CD4-positive, alpha-beta memory T cell (primary cell): ENCODE measurements at regions of chr17 and their contacts with region 1.

Region 1: DNA sequence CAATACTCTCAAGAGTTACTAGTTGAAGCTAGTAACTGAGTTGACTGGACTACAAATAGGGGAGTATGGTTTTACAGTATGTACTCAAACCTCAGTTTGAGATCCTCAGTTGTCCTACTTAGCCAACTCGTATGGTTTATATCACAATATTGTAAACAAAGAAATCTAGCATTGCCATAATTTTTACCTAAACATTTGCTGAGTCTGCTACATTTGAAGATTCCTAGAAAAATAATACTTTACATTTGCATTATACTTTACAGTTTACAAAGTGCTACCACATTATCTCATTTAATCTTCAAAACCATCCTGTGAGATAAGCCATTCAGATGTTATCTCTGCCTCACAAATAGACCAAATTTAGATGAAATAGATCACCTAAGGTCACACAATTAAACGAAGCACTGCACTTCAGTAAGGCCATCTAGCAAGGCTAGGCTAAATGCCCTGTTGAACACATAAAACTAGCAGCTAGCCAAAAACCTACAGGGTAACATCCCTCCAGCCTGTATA is 16.3 kb downstream of the CBX1 start:
- DNase-seq: no peak
- H3K4me3 ChIP-seq: no peak overlapping the region
- H3K4me3 Mint-ChIP-seq: no peak overlapping the region
- H3K27ac ChIP-seq: no peak overlapping the region
- H3K27ac Mint-ChIP-seq: no peak overlapping the region
- H3K4me1 ChIP-seq: no peaks in the 10 kb centered on the region
- H3K4me1 Mint-ChIP-seq: peaks cover 7 to 10% (median 9%) of the 10 kb centered on the region in 4 donors
- H3K27me3 ChIP-seq: no peaks in the 10 kb centered on the region
- H3K27me3 Mint-ChIP-seq: no peaks in the 10 kb centered on the region

Region 2: DNA sequence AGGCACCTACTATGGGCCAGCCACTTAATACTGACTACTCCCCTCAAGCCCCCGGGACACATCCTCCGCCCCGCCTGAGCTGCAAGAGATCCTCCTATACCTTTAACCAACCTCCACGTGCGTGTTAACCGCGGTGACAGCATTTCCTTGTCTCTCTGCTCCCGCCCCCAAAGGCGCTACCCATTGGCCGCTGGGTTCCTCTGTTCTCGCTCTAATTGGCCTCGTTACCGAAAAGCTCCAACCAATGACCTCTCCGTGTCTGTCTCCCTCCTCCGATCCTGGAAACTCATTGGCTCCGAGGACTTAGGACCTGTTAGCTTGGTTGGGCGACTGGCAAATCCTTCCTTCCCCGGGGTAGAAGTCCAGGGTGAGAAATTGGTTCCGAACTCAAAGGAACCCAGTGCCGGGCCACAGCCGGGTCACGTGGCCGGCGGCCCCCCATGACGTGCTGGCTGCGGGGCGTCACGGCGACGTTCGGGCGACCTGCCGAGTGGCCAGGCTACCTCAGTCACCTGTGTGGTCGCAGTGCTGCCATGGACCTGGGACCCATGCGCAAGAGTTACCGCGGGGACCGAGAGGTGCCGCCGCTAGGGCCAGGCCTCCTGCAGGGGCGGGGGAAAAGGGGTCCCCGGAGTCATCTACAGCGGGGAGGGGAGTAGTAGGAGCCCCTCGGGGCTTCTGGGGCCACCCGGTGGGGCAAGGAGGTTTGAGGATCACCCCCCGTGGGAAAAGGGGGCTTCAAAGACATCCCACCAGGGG is 143.6 kb before region 1 on chr17 and contains the start of gene PNPO:
- CTCF ChIA-PET with region 1: no interaction called
- POLR2A ChIA-PET with region 1: no interaction called
- intact Hi-C with region 1: loop called (anchors 10 kb)
- DNase-seq: peak; percentile 93 to 98 (median 94)
- H3K4me3 ChIP-seq: peak within 1 kb of the TSS; percentile 82 to 85
- H3K4me3 Mint-ChIP-seq: peak within 1 kb of the TSS; percentile 77 to 95 (median 88)
- H3K27ac ChIP-seq: peak within 1 kb of the TSS; percentile 76
- H3K27ac Mint-ChIP-seq: peak within 1 kb of the TSS; percentile 62 to 96 (median 92)
- H3K4me1 ChIP-seq: peaks cover 29% of the 10 kb centered on the region
- H3K4me1 Mint-ChIP-seq: peaks cover 20 to 46% (median 32%) of the 10 kb centered on the region in 4 donors
- H3K27me3 ChIP-seq: no peaks in the 10 kb centered on the region
- H3K27me3 Mint-ChIP-seq: no peaks in the 10 kb centered on the region
- total RNA-seq, gene PNPO: 12.1 TPM

Region 3: GRCh38 chr17:47956661-47957590 is 128.1 kb before region 1 on chr17:
- CTCF ChIA-PET with region 1: no interaction called
- POLR2A ChIA-PET with region 1: no interaction called
- intact Hi-C with region 1: no loop called
- DNase-seq: no peak
- H3K4me3 ChIP-seq: no peak overlapping the region
- H3K4me3 Mint-ChIP-seq: no peak overlapping the region
- H3K27ac ChIP-seq: no peak overlapping the region
- H3K27ac Mint-ChIP-seq: peak overlapping the region in 1 of 7 donors; percentile 68
- H3K4me1 ChIP-seq: no peaks in the 10 kb centered on the region
- H3K4me1 Mint-ChIP-seq: no peaks in the 10 kb centered on the region
- H3K27me3 ChIP-seq: no peaks in the 10 kb centered on the region
- H3K27me3 Mint-ChIP-seq: no peaks in the 10 kb centered on the region

Region 4: DNA sequence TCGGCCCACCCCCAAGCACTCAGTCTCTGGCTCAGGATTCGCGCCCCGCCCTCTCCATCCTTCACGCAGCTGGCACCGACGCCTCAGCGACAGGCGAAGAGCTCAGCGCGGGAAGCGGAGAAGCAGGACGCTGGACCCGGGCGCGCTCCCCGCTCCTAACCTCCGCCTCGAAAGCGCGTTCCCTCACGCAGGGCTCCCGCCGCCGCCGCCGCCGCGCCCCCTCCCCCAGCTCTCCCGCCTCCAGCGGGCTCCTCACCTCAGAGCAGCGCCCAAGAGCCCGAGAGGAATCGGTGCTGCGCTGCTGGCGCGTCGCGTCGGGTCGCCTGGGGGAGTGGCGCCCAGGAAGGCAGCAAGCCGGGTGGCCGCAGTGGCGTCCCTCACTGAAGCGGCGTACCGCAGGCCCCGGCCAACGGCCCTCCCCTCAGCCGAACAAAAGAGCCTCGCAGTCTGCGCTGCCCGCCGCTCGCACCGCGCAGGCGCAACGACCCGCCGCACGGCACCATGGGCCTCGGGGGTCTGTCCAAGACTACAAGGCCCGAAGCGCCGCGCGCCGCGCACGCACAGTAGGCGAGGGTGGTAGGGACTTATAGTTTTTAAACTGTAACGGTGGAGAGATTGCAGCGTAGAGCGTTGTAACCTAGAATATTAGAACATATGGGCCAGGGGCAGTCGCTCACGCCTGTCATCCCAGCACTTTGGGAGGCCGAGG is 16.2 kb after region 1 on chr17 and contains the start of gene CBX1:
- CTCF ChIA-PET with region 1: interaction called, 73 read pairs
- POLR2A ChIA-PET with region 1: no interaction called
- intact Hi-C with region 1: loop called (anchors 2 kb)
- DNase-seq: peak; percentile 93 to 96 (median 93)
- H3K4me3 ChIP-seq: peak within 1 kb of the TSS; percentile 36 to 76
- H3K4me3 Mint-ChIP-seq: peak within 1 kb of the TSS; percentile 87 to 95 (median 90)
- H3K27ac ChIP-seq: peak within 1 kb of the TSS; percentile 33
- H3K27ac Mint-ChIP-seq: peak within 1 kb of the TSS; percentile 74 to 93 (median 88)
- H3K4me1 ChIP-seq: peaks cover 18% of the 10 kb centered on the region
- H3K4me1 Mint-ChIP-seq: peaks cover 21 to 49% (median 31%) of the 10 kb centered on the region in 4 donors
- H3K27me3 ChIP-seq: no peaks in the 10 kb centered on the region
- H3K27me3 Mint-ChIP-seq: no peaks in the 10 kb centered on the region
- total RNA-seq, gene CBX1: 33.9 to 37.1 TPM

Region 5: DNA sequence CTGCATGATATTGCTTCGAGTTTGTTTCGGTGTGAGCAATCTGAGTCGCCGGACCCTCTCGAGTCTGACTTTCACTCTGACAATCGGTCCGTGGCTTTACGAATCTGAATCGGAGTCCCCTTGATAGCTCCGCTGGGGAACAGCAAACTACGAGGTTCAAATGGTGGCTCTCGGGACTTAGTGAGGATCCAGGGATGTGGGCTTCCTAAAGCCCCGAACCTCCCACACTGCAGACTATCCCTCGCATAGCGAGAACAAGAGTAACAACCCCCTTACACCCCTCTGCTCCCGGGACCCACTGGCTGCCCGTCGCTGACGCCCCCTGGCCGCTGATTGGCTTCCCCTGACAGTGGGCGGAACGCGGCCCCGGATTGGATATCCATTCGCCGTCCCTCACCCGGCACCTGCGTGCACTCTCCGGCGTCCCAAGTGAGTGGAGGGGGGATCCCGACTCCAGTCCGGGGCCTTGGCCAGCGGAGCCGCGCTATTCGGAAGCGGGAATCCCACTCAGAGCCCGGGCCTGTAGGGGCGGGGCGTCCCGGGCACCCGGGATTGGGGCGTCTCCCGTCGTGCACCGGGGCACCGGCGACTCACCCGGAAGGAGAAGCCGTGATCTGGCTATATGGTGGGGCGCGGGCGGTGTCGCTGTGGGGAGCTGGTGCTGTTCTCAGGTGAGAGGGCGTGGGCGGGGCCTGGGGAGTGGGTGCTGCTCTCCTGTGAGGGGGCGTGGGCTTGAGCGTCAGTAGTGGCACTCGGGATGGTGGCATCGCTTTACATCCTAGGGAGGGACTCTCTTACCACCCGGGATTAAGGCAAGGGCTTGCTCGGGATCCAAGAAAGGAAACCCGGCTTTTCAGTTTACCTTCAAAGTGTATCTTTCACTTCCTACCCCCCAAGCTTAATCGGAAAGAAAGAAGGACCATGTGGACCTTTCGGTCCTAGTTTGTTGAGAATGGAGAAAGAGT is 22.5 kb after region 1 on chr17 and contains the start of gene SNX11:
- CTCF ChIA-PET with region 1: interaction called, 14 read pairs
- POLR2A ChIA-PET with region 1: interaction called, 4 read pairs
- intact Hi-C with region 1: no loop called
- DNase-seq: peak; percentile 93 to 98 (median 95)
- H3K4me3 ChIP-seq: peak within 1 kb of the TSS; percentile 83 to 98
- H3K4me3 Mint-ChIP-seq: peak within 1 kb of the TSS; percentile 92 to 99 (median 97)
- H3K27ac ChIP-seq: peak within 1 kb of the TSS; percentile 85
- H3K27ac Mint-ChIP-seq: peak within 1 kb of the TSS; percentile 82 to 96 (median 94)
- H3K4me1 ChIP-seq: peaks cover 47% of the 10 kb centered on the region
- H3K4me1 Mint-ChIP-seq: peaks cover 36 to 68% (median 51%) of the 10 kb centered on the region in 4 donors
- H3K27me3 ChIP-seq: no peaks in the 10 kb centered on the region
- H3K27me3 Mint-ChIP-seq: no peaks in the 10 kb centered on the region
- total RNA-seq, gene SNX11: 20.8 to 22.0 TPM

Region 6: DNA sequence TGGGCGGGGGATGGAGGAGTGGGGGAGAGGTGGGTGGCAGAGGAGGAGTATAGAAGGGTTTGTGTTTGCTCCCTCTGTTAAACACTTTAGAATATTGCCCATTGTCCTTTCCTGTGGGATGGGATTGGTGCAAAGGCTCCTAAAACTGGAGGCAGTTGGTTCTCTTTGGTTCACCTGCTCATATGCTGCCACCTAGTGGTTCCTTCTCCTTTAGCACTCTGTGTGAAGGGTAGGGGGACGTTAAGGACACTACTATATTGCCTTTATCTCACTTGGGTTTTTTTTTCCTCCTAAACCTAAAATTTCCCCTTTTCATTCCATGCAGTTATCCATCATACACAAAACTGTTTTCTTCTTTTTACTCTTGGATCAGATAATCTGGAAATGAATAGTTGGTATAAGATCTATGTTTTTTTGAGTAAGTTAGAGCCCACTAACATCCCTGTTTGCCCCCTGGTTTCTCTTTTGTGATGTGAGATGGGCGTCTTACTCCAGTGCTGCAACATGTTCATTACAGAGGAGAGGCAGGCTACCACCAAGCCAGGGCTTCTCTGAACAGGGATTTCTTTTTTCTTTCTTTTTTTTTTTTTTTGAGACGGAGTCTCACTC is 46.3 kb after region 1 on chr17:
- CTCF ChIA-PET with region 1: interaction called, 174 read pairs
- POLR2A ChIA-PET with region 1: interaction called, 9 read pairs
- intact Hi-C with region 1: loop called (anchors 1 kb)
- DNase-seq: peak; percentile 49 to 59 (median 50)
- H3K4me3 ChIP-seq: no peak overlapping the region
- H3K4me3 Mint-ChIP-seq: no peak overlapping the region
- H3K27ac ChIP-seq: no peak overlapping the region
- H3K27ac Mint-ChIP-seq: peak overlapping the region in 5 of 7 donors; percentile 23 to 87 (median 62)
- H3K4me1 ChIP-seq: no peaks in the 10 kb centered on the region
- H3K4me1 Mint-ChIP-seq: peaks cover 0 to 5% (median 2%) of the 10 kb centered on the region in 4 donors
- H3K27me3 ChIP-seq: no peaks in the 10 kb centered on the region
- H3K27me3 Mint-ChIP-seq: no peaks in the 10 kb centered on the region

Region 7: DNA sequence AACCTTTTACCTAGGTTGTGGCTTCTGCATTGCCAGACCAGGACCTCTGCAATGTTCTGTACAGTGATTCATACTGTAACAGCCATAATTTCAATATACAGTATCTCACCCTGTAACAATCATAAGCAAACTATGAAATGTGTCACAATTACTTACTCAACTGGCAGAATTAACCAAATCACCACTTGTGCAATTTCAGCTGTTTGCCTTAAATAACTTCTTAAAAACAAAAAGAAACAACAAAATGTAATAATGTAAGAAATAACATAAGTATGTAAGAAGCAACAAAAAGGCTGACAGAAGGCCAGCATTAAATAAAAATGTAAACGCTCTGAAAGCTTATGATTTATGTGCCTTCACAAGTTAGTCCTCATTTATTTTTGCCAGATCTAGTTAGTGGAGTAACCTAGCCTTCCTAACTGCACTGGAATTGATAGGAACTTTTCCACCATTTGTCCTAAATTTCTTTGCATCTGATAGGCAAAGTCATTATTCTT is 248.1 kb after region 1 on chr17:
- CTCF ChIA-PET with region 1: no interaction called
- POLR2A ChIA-PET with region 1: no interaction called
- intact Hi-C with region 1: no loop called
- DNase-seq: no peak
- H3K4me3 ChIP-seq: no peak overlapping the region
- H3K4me3 Mint-ChIP-seq: no peak overlapping the region
- H3K27ac ChIP-seq: no peak overlapping the region
- H3K27ac Mint-ChIP-seq: no peak overlapping the region
- H3K4me1 ChIP-seq: peaks cover 9% of the 10 kb centered on the region
- H3K4me1 Mint-ChIP-seq: peaks cover 7 to 26% (median 14%) of the 10 kb centered on the region in 4 donors
- H3K27me3 ChIP-seq: no peaks in the 10 kb centered on the region
- H3K27me3 Mint-ChIP-seq: no peaks in the 10 kb centered on the region